CD14-positive monocyte (primary cell): ENCODE measurements at regions of chr11 and their contacts with region 1.

Region 1: GRCh38 chr11:1572197-1573076 is at the start of gene DUSP8:
- DNase-seq: peak; percentile 74 to 93 (median 92)
- H3K4me3 ChIP-seq: peak within 1 kb of the TSS in 2 of 3 experiments; percentile 1 to 62
- H3K4me3 Mint-ChIP-seq: peak within 1 kb of the TSS; percentile 30 to 50
- H3K27ac ChIP-seq: no peak within 1 kb of the TSS
- H3K27ac Mint-ChIP-seq: peak within 1 kb of the TSS in 3 of 7 donors; percentile 30 to 65 (median 58)
- H3K4me1 ChIP-seq: peaks cover 6 to 24% of the 10 kb centered on the region in 2 donors
- H3K4me1 Mint-ChIP-seq: no peaks in the 10 kb centered on the region
- H3K27me3 ChIP-seq: peaks cover 27 to 61% of the 10 kb centered on the region in 2 donors
- H3K27me3 Mint-ChIP-seq: peaks cover 58 to 81% (median 62%) of the 10 kb centered on the region in 3 donors
- CTCF ChIP-seq: no peak
- polyA plus RNA-seq, gene DUSP8: 0.61 TPM in 1 of 3 donors, not detected in the others

Region 2: DNA sequence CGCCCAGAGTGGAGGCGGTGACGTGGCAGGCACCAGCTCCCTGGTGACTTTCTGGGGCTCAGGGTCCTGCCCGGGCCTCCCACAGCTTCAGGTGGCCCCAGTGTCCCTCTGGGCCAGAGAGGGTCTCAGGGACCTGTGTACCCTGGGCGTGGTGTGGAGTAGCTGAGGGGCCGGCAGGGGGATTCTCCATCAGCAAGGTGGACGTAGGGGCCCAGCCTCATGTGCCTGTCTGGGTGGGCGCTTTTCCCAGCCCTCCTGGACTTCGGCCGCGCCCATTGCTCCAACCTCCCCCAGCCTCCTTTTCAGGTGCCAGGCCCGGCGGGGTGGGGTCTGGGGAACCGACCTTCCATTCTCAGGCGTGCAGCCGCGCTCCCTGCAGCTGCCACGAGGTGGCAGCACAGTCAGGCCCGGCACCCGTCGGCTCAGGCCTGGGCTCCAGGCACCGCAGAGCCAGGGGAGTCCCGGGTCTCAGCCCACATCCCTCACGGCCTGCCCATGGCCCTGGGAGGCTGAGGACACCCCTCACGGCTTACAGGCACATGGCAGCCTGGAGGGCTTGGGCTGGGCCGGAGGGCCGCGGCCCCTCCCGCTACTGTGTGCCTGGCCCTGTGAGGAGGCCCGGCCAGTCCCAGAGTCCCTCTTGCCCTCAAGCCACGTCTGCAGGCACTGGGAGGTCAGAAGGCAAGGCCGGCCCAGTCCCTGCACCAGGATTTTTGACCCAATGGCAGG is 369.5 kb before region 1 on chr11:
- intact Hi-C with region 1: loop called in 1 of 2 experiments (anchors 5 kb)
- DNase-seq: peak; percentile 20 to 45 (median 36)
- H3K4me3 ChIP-seq: no peak overlapping the region
- H3K4me3 Mint-ChIP-seq: no peak overlapping the region
- H3K27ac ChIP-seq: no peak overlapping the region
- H3K27ac Mint-ChIP-seq: no peak overlapping the region
- H3K4me1 ChIP-seq: no peaks in the 10 kb centered on the region
- H3K4me1 Mint-ChIP-seq: no peaks in the 10 kb centered on the region
- H3K27me3 ChIP-seq: no peaks in the 10 kb centered on the region
- H3K27me3 Mint-ChIP-seq: peaks cover 2 to 4% (median 3%) of the 10 kb centered on the region in 3 donors
- CTCF ChIP-seq: peak; percentile 94

Region 3: GRCh38 chr11:1298695-1299492 is 273.5 kb before region 1 on chr11:
- intact Hi-C with region 1: loop called in 1 of 2 experiments (anchors 10 kb)
- DNase-seq: peak; percentile 71 to 79 (median 72)
- H3K4me3 ChIP-seq: peak overlapping the region in 1 of 3 experiments; percentile 2
- H3K4me3 Mint-ChIP-seq: peak overlapping the region in 1 of 2 donors; percentile 69
- H3K27ac ChIP-seq: peak overlapping the region in 1 of 2 donors; percentile 55
- H3K27ac Mint-ChIP-seq: peak overlapping the region; percentile 40 to 84 (median 79)
- H3K4me1 ChIP-seq: peaks cover 20 to 48% of the 10 kb centered on the region in 2 donors
- H3K4me1 Mint-ChIP-seq: peaks cover 54% of the 10 kb centered on the region
- H3K27me3 ChIP-seq: no peaks in the 10 kb centered on the region
- H3K27me3 Mint-ChIP-seq: no peaks in the 10 kb centered on the region
- CTCF ChIP-seq: no peak

Region 4: DNA sequence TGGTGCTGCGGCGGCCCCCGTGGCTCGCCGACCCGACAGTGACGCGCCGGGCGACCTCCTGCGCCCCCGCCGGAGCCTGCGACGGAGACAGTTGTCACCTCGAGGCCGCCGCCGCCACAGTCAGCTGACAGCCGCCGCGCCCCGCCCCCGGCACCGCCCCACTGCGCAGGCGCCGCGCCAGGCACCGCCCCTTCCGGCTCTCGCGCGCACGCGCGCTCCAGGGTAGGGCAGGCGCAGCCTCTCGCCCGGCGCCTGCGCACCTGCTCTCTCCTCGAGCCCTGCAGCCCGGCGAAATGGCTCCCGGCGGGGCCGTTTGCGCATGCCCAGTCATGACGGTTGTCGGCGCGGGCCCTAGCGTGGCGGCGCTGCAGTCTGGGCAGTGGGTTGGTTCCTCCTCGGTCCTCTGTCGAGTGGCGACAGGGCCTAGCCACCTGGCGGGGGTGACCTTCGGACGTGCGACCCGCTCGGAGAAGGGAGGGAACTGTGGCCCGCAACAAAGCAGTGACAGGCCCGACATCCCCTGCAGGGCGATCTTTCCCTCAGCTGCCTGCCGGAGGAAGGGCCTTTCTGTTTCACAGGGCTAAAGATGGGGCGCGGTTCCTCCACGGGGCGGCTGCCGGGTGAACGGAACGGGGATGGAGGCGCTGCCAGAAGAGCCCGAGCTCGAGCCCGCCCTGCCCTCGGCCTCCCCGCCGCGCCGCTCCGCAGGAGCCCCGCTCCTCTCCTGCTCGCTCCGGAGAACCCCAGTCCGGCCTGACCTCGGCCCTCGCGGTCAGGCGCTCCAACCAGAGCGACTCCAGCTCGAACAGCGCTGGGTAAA is 262.7 kb before region 1 on chr11 and contains the start of gene TOLLIP:
- intact Hi-C with region 1: loop called in 1 of 2 experiments (anchors 5 kb)
- DNase-seq: peak; percentile 94 to 95 (median 94)
- H3K4me3 ChIP-seq: peak within 1 kb of the TSS; percentile 76 to 87 (median 81)
- H3K4me3 Mint-ChIP-seq: peak within 1 kb of the TSS; percentile 76 to 83
- H3K27ac ChIP-seq: peak within 1 kb of the TSS; percentile 92
- H3K27ac Mint-ChIP-seq: peak within 1 kb of the TSS; percentile 89 to 97 (median 94)
- H3K4me1 ChIP-seq: peaks cover 51 to 53% of the 10 kb centered on the region in 2 donors
- H3K4me1 Mint-ChIP-seq: peaks cover 49% of the 10 kb centered on the region
- H3K27me3 ChIP-seq: no peaks in the 10 kb centered on the region
- H3K27me3 Mint-ChIP-seq: peaks cover 0 to 4% (median 2%) of the 10 kb centered on the region in 3 donors
- CTCF ChIP-seq: no peak
- polyA plus RNA-seq, gene TOLLIP: 67.9 to 72.1 (median 71.7) TPM

Region 5: GRCh38 chr11:1502954-1503707 is 69.3 kb before region 1 on chr11:
- intact Hi-C with region 1: no loop called
- DNase-seq: no peak
- H3K4me3 ChIP-seq: no peak overlapping the region
- H3K4me3 Mint-ChIP-seq: no peak overlapping the region
- H3K27ac ChIP-seq: no peak overlapping the region
- H3K27ac Mint-ChIP-seq: peak overlapping the region in 1 of 7 donors; percentile 40
- H3K4me1 ChIP-seq: no peaks in the 10 kb centered on the region
- H3K4me1 Mint-ChIP-seq: peaks cover 12% of the 10 kb centered on the region
- H3K27me3 ChIP-seq: no peaks in the 10 kb centered on the region
- H3K27me3 Mint-ChIP-seq: peaks cover 0 to 6% (median 2%) of the 10 kb centered on the region in 3 donors
- CTCF ChIP-seq: no peak